ENCODE measurements at regions of chr1 and their contacts with region 1.

Region 1: DNA sequence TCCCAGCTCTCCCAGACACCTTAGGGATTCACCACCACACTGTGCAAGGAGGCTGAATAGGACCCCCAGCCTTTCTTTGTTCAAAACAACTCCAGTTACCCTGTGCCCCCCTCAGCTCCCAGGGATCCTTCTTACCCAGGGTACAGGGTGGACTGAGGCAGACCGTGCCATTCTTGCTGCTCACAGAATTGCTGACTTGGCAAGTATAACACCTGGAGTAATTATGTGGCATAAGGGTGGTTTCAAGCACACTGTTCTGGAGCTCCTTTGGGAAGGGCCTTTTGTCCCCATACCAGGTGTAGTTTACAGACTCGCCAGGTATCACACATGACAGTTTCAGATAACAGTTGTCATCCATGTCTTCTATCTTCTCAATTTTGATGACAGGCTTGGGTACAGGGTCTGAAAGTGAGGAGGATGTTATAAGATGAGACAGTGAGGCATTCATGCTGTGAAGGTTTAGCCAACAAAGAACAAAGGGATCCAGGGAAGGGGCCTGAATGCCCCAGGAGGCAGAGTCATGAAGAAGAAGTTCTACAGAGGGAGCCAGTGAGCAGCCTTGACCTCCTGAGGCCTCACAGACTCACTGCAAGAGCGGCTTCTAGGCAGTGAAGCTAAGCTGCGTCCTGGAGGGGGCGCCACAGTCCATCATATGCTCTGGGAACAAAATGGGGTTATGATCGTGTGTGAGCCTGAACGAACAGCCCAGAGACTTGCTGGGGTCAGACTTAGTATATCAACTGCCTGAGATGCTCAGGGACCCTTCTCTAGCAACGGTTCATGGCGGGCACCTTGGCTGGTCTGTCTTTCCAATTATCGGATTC is 30.3 kb downstream of the CD48 start:
- DNase-seq: peak; percentile 78
- ATAC-seq: peak; percentile 99
- H3K4me3 ChIP-seq: no peak overlapping the region
- H3K27ac ChIP-seq: no peak overlapping the region
- H3K4me1 ChIP-seq: no peaks in the 10 kb centered on the region
- H3K27me3 ChIP-seq: no peaks in the 10 kb centered on the region
- CTCF ChIP-seq: peak; percentile 88 to 98 (median 95)
- POLR2A ChIP-seq: no peak
- RAD21 ChIP-seq: peak; percentile 89

Region 2: GRCh38 chr1:160768295-160768657 is 87.0 kb after region 1 on chr1:
- CTCF ChIA-PET with region 1: interaction called, 10 read pairs
- POLR2A ChIA-PET with region 1: no interaction called
- RAD21 ChIA-PET with region 1: no interaction called
- intact Hi-C with region 1: no loop called
- DNase-seq: no peak
- ATAC-seq: peak; percentile 81
- H3K4me3 ChIP-seq: no peak overlapping the region
- H3K27ac ChIP-seq: no peak overlapping the region
- H3K4me1 ChIP-seq: no peaks in the 10 kb centered on the region
- H3K27me3 ChIP-seq: no peaks in the 10 kb centered on the region
- CTCF ChIP-seq: peak; percentile 34 to 67 (median 49); a peak in 5 of 6 replicates
- POLR2A ChIP-seq: no peak
- RAD21 ChIP-seq: peak; percentile 44

Region 3: GRCh38 chr1:160830321-160831153 is 149.3 kb after region 1 on chr1:
- CTCF ChIA-PET with region 1: interaction called, 4 read pairs
- POLR2A ChIA-PET with region 1: no interaction called
- RAD21 ChIA-PET with region 1: no interaction called
- intact Hi-C with region 1: loop called (anchors 1 kb)
- DNase-seq: peak; percentile 53
- ATAC-seq: peak; percentile 97
- H3K4me3 ChIP-seq: no peak overlapping the region
- H3K27ac ChIP-seq: no peak overlapping the region
- H3K4me1 ChIP-seq: 0 out of 4 replicates have a peak, but pooled peaks cover 0 to 3% of the 10 kb centered on the region in 2 experiments
- H3K27me3 ChIP-seq: peaks cover 5% of the 10 kb centered on the region; the same call in 1 of the 2 replicates
- CTCF ChIP-seq: peak; percentile 78 to 91 (median 87)
- POLR2A ChIP-seq: no peak
- RAD21 ChIP-seq: peak; percentile 70

Region 4: GRCh38 chr1:161382214-161383019 is 701.1 kb after region 1 on chr1:
- CTCF ChIA-PET with region 1: no interaction called
- POLR2A ChIA-PET with region 1: no interaction called
- RAD21 ChIA-PET with region 1: no interaction called
- intact Hi-C with region 1: loop called (anchors 5 kb)
- DNase-seq: peak; percentile 45
- ATAC-seq: peak; percentile 86
- H3K4me3 ChIP-seq: no peak overlapping the region
- H3K27ac ChIP-seq: no peak overlapping the region
- H3K4me1 ChIP-seq: peaks cover 5 to 14% of the 10 kb centered on the region in 2 experiments; a peak in 3 of 4 replicates
- H3K27me3 ChIP-seq: no peaks in the 10 kb centered on the region
- CTCF ChIP-seq: peak; percentile 56 to 85 (median 72)
- POLR2A ChIP-seq: no peak
- RAD21 ChIP-seq: peak; percentile 84

Measured in HCT116 (cell line).